Gastrocnemius medialis (tissue), 4 donors: ENCODE measurements at regions of chr5 and their contacts with region 1.

Region 1: DNA sequence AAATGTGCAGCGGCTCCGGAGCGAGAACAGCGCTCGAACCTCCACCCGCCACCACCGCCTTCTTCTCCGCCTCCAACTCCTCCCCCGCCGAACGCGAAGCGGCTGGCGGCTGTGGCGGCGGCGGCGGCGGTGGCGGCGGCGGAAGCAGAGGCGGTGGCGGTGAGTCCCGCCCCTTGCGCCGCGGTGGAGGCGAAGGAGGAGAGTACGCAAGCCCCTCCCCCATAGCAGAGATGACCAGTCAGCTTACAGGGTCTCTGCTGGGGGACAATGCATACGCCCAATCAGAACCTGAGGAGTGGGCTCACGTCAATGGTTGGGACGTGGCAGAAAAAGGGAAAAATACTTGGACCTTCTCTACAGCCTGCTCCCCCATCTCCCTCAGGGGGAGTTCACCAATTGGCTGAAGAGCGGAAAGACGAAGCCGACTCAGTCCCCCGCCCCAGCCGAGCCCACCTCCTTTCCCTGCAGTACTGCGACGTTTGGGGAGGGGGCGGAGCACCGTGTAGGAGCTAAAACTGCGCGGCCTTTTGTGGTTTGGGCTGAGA is at the start of gene PJA2:
- DNase-seq: peak; percentile 98 to 99
- ATAC-seq: peak; percentile 91 to 92
- H3K4me3 ChIP-seq: peak within 1 kb of the TSS; percentile 82 to 95 (median 88)
- H3K27ac ChIP-seq: peak within 1 kb of the TSS; percentile 94 to 99 (median 99)
- H3K4me1 ChIP-seq: peaks cover 38 to 46% of the 10 kb centered on the region in 2 donors
- H3K27me3 ChIP-seq: no peaks in the 10 kb centered on the region
- CTCF ChIP-seq: peak; percentile 23 to 59 (median 58)
- POLR2A ChIP-seq: peak; percentile 79 to 80
- total RNA-seq, gene PJA2: 37.6 to 64.9 (median 58.7) TPM

Region 2: DNA sequence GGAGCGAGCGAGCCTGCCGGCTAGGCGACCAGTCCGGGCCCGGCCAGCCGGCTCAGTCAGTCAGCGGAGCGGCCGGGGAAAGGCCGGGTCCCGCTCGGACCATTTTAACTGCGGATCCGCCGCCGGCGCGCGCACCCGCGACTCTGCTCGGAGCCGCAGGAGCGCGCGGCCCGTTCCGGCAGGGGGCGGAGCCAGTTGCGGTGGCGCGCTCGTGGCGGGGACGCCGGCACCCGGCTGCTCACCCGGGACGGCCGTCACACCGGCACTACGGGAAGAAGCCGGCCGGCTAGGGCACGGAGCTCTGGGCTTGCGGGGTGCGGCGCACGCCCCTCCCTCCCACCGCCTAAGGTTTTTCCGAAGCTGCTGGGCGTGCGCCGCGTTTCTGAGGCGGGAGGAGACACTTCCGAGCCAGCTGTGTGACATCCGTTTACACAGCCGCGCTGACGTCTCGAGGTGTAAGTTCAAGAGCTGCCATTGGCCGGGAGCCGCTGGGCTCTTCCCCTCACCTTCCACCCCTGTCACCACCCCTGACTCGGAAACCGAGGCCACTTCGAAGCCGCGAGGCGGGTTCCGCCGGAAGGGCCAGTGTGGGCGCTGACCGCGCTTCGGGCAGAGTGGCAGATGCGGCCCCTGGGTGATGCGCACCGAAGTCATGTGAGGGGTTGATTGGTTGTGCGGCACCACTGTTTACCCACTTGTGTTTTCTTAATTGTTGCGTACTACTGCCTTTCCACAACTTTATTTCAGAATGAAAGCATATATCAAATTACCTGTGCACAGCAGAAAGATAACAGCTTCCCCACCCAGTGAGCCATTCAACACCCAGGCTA is 1027.7 kb before region 1 on chr5 and contains the start of gene FBXL17:
- in situ Hi-C with region 1: no loop called
- intact Hi-C with region 1: loop called (anchors 10 kb)
- DNase-seq: peak; percentile 93 to 96
- ATAC-seq: peak; percentile 86 to 92
- H3K4me3 ChIP-seq: peak within 1 kb of the TSS; percentile 77 to 97 (median 94)
- H3K27ac ChIP-seq: peak within 1 kb of the TSS; percentile 96 to 100 (median 99)
- H3K4me1 ChIP-seq: peaks cover 37 to 38% of the 10 kb centered on the region in 2 donors
- H3K27me3 ChIP-seq: no peaks in the 10 kb centered on the region
- CTCF ChIP-seq: peak in 1 of 5 experiments; percentile 41
- POLR2A ChIP-seq: peak; percentile 91
- total RNA-seq, gene FBXL17: 23.3 to 33.4 (median 26.9) TPM

Region 3: DNA sequence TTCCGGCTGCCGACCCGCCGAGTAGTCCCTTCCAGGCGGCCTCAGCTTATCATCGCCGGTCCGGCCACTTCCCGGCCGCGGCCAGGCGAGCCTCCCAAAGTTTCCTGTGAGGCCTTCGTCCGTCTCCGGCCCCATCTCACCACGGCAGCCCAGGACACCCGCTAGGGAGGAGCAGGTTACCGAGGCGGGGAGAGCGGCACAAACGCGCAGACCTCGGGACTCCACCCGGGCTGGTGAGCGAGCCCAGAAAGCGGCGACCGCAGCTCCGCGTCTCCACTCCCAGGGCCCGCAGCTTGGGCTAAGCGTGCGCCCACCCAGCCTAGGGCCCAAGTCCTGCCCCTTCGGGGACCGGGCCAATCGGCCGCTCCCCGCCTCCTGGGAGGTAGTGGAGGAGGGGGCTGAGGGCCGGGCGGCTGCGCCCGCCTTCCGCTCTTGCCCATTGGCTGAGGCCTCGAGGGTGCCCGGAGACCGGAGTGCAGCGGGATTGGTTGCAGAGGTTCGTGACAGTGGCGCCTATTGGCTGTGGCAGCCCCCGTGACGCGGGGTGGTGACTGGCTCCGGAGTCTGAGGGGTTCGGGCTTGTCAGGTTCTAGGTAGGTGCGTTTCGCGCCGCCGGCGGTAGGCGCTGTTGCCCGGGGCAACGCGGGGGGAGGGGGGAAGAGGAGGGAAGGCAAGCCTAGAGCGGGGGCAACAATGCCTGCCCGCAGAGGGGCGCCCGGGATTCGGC is 661.4 kb before region 1 on chr5:
- in situ Hi-C with region 1: loop called in 1 of 4 experiments (anchors 25 kb)
- intact Hi-C with region 1: loop called (anchors 1 kb)
- DNase-seq: peak; percentile 99
- ATAC-seq: peak; percentile 94 to 95
- H3K4me3 ChIP-seq: peak overlapping the region; percentile 88 to 99 (median 96)
- H3K27ac ChIP-seq: peak overlapping the region; percentile 96 to 100 (median 98)
- H3K4me1 ChIP-seq: peaks cover 3 to 15% of the 10 kb centered on the region in 2 donors
- H3K27me3 ChIP-seq: no peaks in the 10 kb centered on the region
- CTCF ChIP-seq: peak in 2 of 5 experiments; percentile 16 to 35
- POLR2A ChIP-seq: peak; percentile 95 to 96

Region 4: DNA sequence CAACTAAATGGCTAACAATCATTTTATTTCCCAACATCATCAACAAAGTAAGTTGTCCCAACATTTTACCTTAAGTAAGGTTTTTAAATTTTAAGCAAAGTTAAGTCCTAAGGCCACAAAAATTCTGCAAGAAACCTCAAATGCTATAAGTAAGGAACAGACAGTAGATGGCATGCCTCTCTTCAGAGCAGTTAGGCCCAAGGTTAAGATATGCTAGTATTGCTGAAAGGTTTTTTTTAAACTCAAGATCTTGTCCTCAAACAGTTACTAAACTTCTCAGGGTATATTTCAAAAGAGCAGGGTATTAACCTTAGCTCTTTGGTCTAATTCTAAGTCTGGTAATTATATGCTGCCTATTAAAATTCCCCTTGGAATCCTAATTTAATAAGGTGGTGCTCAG is 35.3 kb before region 1 on chr5:
- in situ Hi-C with region 1: no loop called
- intact Hi-C with region 1: loop called (anchors 5 kb)
- DNase-seq: no peak
- ATAC-seq: no peak
- H3K4me3 ChIP-seq: no peak overlapping the region
- H3K27ac ChIP-seq: no peak overlapping the region
- H3K4me1 ChIP-seq: peaks cover 24 to 27% of the 10 kb centered on the region in 2 donors
- H3K27me3 ChIP-seq: no peaks in the 10 kb centered on the region
- CTCF ChIP-seq: no peak
- POLR2A ChIP-seq: no peak

Region 5: GRCh38 chr5:110738812-110739651 is 1329.1 kb after region 1 on chr5 and contains the start of gene SLC25A46:
- in situ Hi-C with region 1: no loop called
- intact Hi-C with region 1: loop called (anchors 5 kb)
- DNase-seq: peak; percentile 70 to 81
- ATAC-seq: peak; percentile 99 to 100
- H3K4me3 ChIP-seq: peak within 1 kb of the TSS; percentile 83 to 100 (median 95)
- H3K27ac ChIP-seq: peak within 1 kb of the TSS; percentile 88 to 93 (median 91)
- H3K4me1 ChIP-seq: peaks cover 10 to 16% of the 10 kb centered on the region in 2 donors
- H3K27me3 ChIP-seq: peaks cover 0 to 2% (median 0%) of the 10 kb centered on the region in 3 donors
- CTCF ChIP-seq: no peak
- POLR2A ChIP-seq: peak; percentile 46 to 60
- total RNA-seq, gene SLC25A46: 71.5 to 114 (median 99.7) TPM